Activated B cell treated with CpG ODN at 0.5 μM for 24 hours (primary cell): ENCODE measurements at regions of chr1 and their contacts with region 1.

Region 1: DNA sequence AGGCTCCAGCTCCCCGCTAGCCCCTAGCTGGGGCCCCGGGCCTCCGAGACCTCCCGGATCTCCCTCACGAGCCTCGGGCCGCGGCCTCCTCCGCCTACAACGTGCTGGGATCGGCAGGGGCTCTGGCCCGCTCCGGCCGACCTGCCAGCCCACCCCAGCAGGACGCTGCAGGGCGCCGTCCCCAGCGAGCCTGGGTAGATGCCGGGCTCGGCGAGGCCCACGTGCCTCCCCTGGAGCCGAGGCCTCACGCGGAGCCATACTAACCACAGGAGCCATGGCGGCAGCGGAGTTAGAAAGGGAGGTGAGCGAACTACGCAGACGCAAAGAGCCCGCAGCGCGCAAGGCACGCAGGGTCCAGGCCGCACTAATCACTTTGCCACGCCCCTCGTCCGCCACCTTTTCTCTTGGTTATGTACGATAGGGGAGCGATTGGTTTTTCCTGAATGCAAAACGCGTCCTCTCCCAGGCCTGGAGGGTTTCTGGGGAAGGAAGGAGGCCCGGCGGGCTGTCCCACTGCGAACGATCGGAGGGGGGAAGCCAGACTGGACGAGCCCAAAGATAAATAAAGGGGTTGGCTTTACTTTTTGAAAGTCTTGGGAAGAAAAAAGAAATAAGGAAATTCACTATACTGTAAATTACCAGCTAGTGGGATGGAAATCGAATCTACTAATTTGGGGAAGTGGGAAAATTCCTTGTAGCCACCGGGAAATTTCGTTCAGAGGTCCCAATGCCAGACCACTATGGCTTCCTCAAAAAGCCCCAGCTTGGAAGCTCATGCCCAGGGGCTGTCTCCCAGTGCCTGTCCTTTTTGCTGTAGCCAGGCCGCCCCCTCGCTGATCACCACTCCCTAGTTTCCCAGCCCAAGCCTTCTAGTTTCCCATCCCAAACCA is at the start of gene RPL22:
- DNase-seq: peak; percentile 89
- ATAC-seq: peak; percentile 97
- H3K4me3 Mint-ChIP-seq: peak within 1 kb of the TSS; percentile 88
- H3K27ac Mint-ChIP-seq: peak within 1 kb of the TSS; percentile 94
- H3K4me1 Mint-ChIP-seq: peaks cover 44% of the 10 kb centered on the region
- H3K27me3 Mint-ChIP-seq: peaks cover 3% of the 10 kb centered on the region
- CTCF ChIP-seq: no peak
- total RNA-seq, gene RPL22: 614 and 621 TPM in 2 replicates

Region 2: DNA sequence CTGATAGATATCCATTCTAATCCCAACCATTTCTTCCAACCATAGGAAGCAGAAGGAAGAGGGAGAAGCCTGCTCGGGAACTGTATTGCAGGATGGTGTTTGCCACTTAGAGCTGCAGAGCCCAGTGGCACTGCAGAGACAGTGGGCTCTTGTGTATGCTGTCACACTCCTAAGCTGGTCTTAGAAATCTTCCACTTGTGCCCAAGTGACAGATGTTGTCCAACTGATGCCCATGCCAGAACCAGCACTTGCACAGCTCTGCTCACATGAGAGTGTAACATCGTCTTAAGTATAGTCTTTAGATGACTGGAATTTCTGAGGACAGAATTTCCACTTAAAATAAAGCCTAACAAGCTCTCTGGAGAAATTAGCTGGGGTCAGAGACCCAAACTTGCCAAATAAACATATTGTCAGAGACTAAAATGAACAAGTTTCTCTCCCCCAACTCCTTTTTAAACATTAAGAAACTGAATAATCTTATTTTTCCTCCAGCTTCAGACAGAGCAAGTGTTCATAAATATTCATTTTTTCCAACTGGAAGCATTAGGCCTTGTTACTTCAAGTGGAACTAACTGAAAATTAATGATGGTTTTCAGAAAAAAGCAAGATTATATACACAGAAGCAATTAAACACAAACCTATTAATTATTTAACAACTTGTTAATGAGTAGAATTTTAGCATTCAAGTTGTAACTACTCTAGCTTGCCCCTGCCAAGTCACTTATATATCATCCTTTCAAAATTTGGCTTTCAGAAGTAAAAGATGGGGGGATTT is 967.8 kb before region 1 on chr1:
- CTCF ChIA-PET with region 1: no interaction called
- POLR2A ChIA-PET with region 1: no interaction called
- intact Hi-C with region 1: no loop called
- DNase-seq: no peak
- ATAC-seq: no peak
- H3K4me3 Mint-ChIP-seq: no peak overlapping the region
- H3K27ac Mint-ChIP-seq: no peak overlapping the region
- H3K4me1 Mint-ChIP-seq: no peaks in the 10 kb centered on the region
- H3K27me3 Mint-ChIP-seq: peaks cover 3% of the 10 kb centered on the region
- CTCF ChIP-seq: no peak

Region 3: GRCh38 chr1:5992026-5992813 is 207.3 kb before region 1 on chr1 and contains the start of gene NPHP4:
- CTCF ChIA-PET with region 1: no interaction called
- POLR2A ChIA-PET with region 1: interaction called, 7 read pairs
- intact Hi-C with region 1: loop called (anchors 2 kb)
- DNase-seq: peak; percentile 93
- ATAC-seq: peak; percentile 90
- H3K4me3 Mint-ChIP-seq: peak within 1 kb of the TSS; percentile 94
- H3K27ac Mint-ChIP-seq: peak within 1 kb of the TSS; percentile 84
- H3K4me1 Mint-ChIP-seq: peaks cover 34% of the 10 kb centered on the region
- H3K27me3 Mint-ChIP-seq: no peaks in the 10 kb centered on the region
- CTCF ChIP-seq: no peak
- total RNA-seq, gene NPHP4: 6.2 and 8.0 TPM in 2 replicates

Region 4: GRCh38 chr1:6026095-6026809 is 173.3 kb before region 1 on chr1:
- CTCF ChIA-PET with region 1: no interaction called
- POLR2A ChIA-PET with region 1: no interaction called
- intact Hi-C with region 1: loop called (anchors 1 kb)
- DNase-seq: peak; percentile 87
- ATAC-seq: peak; percentile 84
- H3K4me3 Mint-ChIP-seq: peak overlapping the region; percentile 86
- H3K27ac Mint-ChIP-seq: peak overlapping the region; percentile 90
- H3K4me1 Mint-ChIP-seq: peaks cover 71% of the 10 kb centered on the region
- H3K27me3 Mint-ChIP-seq: no peaks in the 10 kb centered on the region
- CTCF ChIP-seq: no peak

Region 5: DNA sequence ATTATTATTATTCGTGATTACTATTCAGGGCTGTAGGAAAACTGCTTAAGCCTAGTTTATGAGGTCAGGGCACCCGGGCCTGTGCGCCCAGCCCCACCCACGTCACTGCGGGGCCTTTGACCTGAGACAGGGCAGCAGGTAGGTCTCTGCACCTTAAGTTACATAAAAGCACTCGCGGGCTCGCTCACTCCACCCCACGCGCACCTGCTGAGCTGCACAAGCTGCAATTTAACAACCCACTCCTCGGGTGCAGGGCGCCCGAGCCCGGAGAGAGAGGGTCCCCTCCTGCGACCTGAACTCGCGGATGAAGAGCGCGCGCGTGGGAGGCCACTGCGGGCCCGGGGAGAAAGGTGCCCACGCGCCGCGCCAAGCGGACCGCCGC is 35.7 kb after region 1 on chr1:
- CTCF ChIA-PET with region 1: interaction called, 3 read pairs
- POLR2A ChIA-PET with region 1: interaction called, 5 read pairs
- intact Hi-C with region 1: loop called (anchors 1 kb)
- DNase-seq: no peak
- ATAC-seq: no peak
- H3K4me3 Mint-ChIP-seq: peak overlapping the region; percentile 90
- H3K27ac Mint-ChIP-seq: no peak overlapping the region
- H3K4me1 Mint-ChIP-seq: peaks cover 8% of the 10 kb centered on the region
- H3K27me3 Mint-ChIP-seq: peaks cover 14% of the 10 kb centered on the region
- CTCF ChIP-seq: no peak

Region 6: GRCh38 chr1:6393400-6394187 is 194.1 kb after region 1 on chr1 and contains the start of gene ACOT7:
- CTCF ChIA-PET with region 1: no interaction called
- POLR2A ChIA-PET with region 1: interaction called, 3 read pairs
- intact Hi-C with region 1: loop called (anchors 1 kb)
- DNase-seq: peak; percentile 86
- ATAC-seq: peak; percentile 91
- H3K4me3 Mint-ChIP-seq: peak within 1 kb of the TSS; percentile 87
- H3K27ac Mint-ChIP-seq: peak within 1 kb of the TSS; percentile 93
- H3K4me1 Mint-ChIP-seq: peaks cover 22% of the 10 kb centered on the region
- H3K27me3 Mint-ChIP-seq: no peaks in the 10 kb centered on the region
- CTCF ChIP-seq: no peak
- total RNA-seq, gene ACOT7: 12.3 and 12.7 TPM in 2 replicates

Region 7: DNA sequence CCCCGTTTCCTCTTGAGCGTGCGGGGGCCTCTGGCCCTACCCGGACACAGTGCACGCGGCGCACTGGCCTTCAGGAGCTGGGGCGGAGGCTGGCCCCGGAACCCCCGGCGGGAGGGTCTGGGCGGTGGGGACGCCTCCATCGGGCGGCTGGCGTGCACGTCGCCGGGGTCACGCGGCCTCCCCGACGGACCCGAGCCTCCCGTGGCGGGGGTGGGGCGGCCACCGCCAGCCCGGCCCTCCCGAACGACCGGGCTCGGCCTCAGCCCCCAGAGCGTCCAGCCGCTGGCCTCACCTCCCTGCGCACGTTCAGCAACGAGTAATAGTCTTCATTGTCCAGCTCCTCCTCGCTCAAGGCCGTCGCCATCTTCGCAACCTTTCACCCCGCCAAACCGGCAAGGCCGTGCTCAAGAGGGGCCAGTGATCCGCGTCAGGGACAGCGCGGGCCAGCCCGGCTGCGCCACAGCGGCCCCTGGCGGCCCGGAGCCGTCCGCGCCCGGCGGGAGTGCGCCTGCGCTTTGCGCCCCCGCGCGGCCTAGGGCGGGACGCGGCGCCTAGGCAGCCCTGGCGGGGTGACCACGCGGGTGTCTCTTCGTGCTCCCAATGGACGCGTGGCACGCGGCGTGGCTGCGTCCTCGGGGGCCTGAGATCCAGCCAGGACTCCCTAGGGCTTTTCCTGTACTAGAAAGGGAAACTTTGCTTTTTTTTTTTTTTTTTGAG is 502.1 kb after region 1 on chr1 and contains the start of gene DNAJC11:
- CTCF ChIA-PET with region 1: no interaction called
- POLR2A ChIA-PET with region 1: no interaction called
- intact Hi-C with region 1: loop called (anchors 2 kb)
- DNase-seq: peak; percentile 99
- ATAC-seq: peak; percentile 95
- H3K4me3 Mint-ChIP-seq: peak within 1 kb of the TSS; percentile 92
- H3K27ac Mint-ChIP-seq: peak within 1 kb of the TSS; percentile 88
- H3K4me1 Mint-ChIP-seq: peaks cover 21% of the 10 kb centered on the region
- H3K27me3 Mint-ChIP-seq: no peaks in the 10 kb centered on the region
- CTCF ChIP-seq: peak; percentile 28
- total RNA-seq, gene DNAJC11: 57.0 and 65.6 TPM in 2 replicates